OCI-LY7 (cell line): ENCODE measurements at regions of chr6 and their contacts with region 1.

Region 1: DNA sequence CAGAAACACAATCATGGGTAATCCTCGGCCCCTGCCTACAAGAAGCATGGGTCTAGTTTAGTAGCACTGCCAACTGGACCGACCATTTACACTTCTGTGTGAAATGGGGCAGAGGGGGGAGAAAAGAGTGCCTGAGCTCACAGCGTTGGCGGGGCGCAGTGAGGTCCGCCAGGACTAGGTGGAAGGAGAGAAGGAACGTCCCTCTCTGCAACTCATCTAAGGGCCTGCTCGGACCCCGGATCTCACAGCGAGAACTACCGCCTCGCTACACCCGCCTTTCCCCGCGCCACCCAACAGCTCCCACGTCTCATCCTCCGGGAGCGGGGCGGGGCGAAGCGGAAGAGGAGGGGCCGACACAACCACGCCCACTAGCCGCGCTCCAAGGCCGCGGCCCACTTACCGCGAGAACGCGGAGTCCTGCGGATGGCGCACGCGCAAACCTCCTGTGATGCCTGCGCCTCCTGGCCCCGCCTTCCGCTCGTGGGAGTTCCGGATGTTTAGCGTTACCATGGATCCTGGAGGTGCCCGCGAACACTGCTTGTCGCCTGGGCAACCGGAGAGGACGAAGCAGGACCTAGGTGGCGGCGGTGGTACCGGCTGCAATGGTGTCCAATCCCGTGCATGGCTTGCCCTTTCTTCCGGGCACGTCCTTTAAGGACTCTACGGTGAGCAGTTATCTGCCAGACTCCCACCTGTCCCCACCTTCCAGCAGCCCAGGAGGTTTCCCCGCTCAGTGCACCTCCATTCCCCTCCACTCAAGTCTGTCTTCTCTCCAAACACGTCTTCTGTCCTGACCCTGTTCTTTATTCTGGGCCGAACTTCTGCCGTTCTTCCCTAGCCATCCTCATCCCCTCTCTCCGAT is at the start of gene EFHC1:
- DNase-seq: peak; percentile 99
- H3K4me3 ChIP-seq: peak within 1 kb of the TSS; percentile 75
- H3K27ac ChIP-seq: peak within 1 kb of the TSS; percentile 60
- H3K4me1 ChIP-seq: peaks cover 56% of the 10 kb centered on the region
- CTCF ChIP-seq: no peak
- total RNA-seq, gene EFHC1: 20.7 and 24.8 TPM in 2 replicates

Region 2: GRCh38 chr6:52497652-52498408 is 77.8 kb after region 1 on chr6:
- CTCF ChIA-PET with region 1: interaction called, 9 read pairs
- POLR2A ChIA-PET with region 1: interaction called, 129 read pairs
- intact Hi-C with region 1: loop called (anchors 1 kb)
- DNase-seq: peak; percentile 95
- H3K4me3 ChIP-seq: peak overlapping the region; percentile 59
- H3K27ac ChIP-seq: peak overlapping the region; percentile 99
- H3K4me1 ChIP-seq: peaks cover 75% of the 10 kb centered on the region
- CTCF ChIP-seq: no peak

Region 3: GRCh38 chr6:52537001-52537753 is 117.1 kb after region 1 on chr6:
- CTCF ChIA-PET with region 1: no interaction called
- POLR2A ChIA-PET with region 1: interaction called, 19 read pairs
- intact Hi-C with region 1: no loop called
- DNase-seq: peak; percentile 81
- H3K4me3 ChIP-seq: peak overlapping the region; percentile 55
- H3K27ac ChIP-seq: peak overlapping the region; percentile 95
- H3K4me1 ChIP-seq: peaks cover 79% of the 10 kb centered on the region
- CTCF ChIP-seq: no peak

Region 4: GRCh38 chr6:52647199-52647598 is 227.2 kb after region 1 on chr6:
- CTCF ChIA-PET with region 1: interaction called, 3 read pairs
- POLR2A ChIA-PET with region 1: interaction called, 10 read pairs
- intact Hi-C with region 1: no loop called
- DNase-seq: no peak
- H3K4me3 ChIP-seq: no peak overlapping the region
- H3K27ac ChIP-seq: no peak overlapping the region
- H3K4me1 ChIP-seq: peaks cover 4% of the 10 kb centered on the region
- CTCF ChIP-seq: no peak

Region 5: DNA sequence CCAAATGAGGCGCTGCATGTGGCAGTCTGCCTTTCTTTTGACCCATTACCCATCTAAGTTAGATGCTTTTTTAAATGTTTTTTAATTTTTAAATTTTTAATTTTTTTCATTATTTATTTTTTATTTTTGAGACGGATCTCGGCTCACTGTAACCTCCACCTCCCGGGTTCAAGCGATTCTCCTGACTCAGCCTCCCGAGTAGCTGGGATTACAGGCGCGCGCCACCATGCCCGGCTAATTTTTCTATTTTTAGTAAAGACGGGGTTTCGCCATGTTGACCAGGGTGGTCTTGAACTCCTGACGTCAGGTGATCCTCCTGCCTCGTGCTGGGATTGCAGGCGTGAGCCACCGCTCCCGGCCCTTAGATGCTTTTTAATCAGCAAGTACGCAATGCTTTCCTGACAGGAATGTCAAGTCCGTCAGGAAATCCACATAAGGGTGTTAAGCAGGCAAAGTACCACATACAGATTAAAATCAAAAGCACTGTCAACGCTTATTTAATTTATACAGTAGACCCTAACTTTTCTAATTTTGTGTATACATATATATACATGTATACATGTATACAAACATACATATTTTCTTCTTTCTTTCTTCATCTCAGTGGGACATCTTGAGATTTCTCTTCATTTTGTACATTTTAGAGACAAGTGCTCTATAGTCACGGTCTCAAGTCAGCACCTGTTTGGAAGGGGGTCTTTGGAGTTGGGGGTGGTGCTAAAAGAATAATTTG is 576.0 kb after region 1 on chr6:
- CTCF ChIA-PET with region 1: no interaction called
- POLR2A ChIA-PET with region 1: no interaction called
- intact Hi-C with region 1: loop called (anchors 5 kb)
- DNase-seq: peak; percentile 63
- H3K4me3 ChIP-seq: peak overlapping the region; percentile 59
- H3K27ac ChIP-seq: no peak overlapping the region
- H3K4me1 ChIP-seq: peaks cover 12% of the 10 kb centered on the region
- CTCF ChIP-seq: no peak